MCF 10A (cell line): ENCODE measurements at regions of chr15 and their contacts with region 1.

Region 1: GRCh38 chr15:40217159-40217824 is 21.6 kb upstream of the PAK6 start:
- DNase-seq: peak; percentile 70
- H3K4me3 Mint-ChIP-seq: no peak overlapping the region
- H3K27ac Mint-ChIP-seq: no peak overlapping the region
- H3K4me1 Mint-ChIP-seq: peaks cover 6% of the 10 kb centered on the region
- H3K27me3 Mint-ChIP-seq: no peaks in the 10 kb centered on the region
- CTCF ChIP-seq: peak; percentile 91

Region 2: GRCh38 chr15:39976291-39977274 is 240.7 kb before region 1 on chr15:
- CTCF ChIA-PET with region 1: no interaction called
- POLR2A ChIA-PET with region 1: no interaction called
- intact Hi-C with region 1: no loop called
- DNase-seq: no peak
- H3K4me3 Mint-ChIP-seq: no peak overlapping the region
- H3K27ac Mint-ChIP-seq: no peak overlapping the region
- H3K4me1 Mint-ChIP-seq: no peaks in the 10 kb centered on the region
- H3K27me3 Mint-ChIP-seq: no peaks in the 10 kb centered on the region
- CTCF ChIP-seq: no peak

Region 3: DNA sequence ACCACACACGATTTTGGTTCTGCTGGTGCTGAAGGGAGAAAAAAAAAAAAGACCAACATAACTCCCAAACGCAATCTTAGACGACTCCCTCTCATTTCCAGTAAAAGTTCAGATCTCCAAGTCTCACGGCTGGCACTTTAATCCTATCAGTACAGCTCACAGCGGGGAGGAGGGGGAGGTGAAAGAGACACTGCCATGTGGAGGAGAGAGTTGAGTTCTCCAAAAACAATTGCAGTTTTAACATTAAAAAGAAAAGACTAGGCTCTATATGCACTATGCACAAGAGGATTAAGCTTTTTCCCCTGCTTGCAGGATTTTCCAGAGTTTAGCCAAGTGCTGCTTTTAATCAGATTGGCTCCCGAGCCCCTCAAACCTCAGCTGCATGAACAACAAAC is 125.4 kb before region 1 on chr15:
- CTCF ChIA-PET with region 1: no interaction called
- POLR2A ChIA-PET with region 1: no interaction called
- intact Hi-C with region 1: no loop called
- DNase-seq: no peak
- H3K4me3 Mint-ChIP-seq: no peak overlapping the region
- H3K27ac Mint-ChIP-seq: no peak overlapping the region
- H3K4me1 Mint-ChIP-seq: peaks cover 16% of the 10 kb centered on the region
- H3K27me3 Mint-ChIP-seq: no peaks in the 10 kb centered on the region
- CTCF ChIP-seq: no peak

Region 4: DNA sequence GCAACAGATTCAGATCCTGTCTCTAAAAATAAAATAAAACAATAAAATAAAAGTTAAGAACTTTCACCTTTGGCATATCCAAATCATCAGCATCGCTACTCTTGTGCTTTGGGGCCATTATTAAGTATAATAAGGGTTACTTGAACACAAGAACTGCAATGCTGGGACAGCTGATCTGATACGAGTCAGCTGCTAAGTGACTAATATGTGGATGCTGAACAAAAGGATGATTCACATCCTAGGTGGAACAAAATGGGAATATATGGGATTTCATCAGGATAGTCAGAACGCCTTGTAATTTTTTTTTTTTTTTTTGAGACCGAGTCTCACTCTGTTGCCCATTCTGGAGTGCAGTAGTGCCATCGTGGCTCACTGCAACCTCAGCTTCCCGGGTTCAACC is 26.7 kb before region 1 on chr15:
- CTCF ChIA-PET with region 1: interaction called, 12 read pairs
- POLR2A ChIA-PET with region 1: no interaction called
- intact Hi-C with region 1: no loop called
- DNase-seq: peak; percentile 48
- H3K4me3 Mint-ChIP-seq: no peak overlapping the region
- H3K27ac Mint-ChIP-seq: no peak overlapping the region
- H3K4me1 Mint-ChIP-seq: peaks cover 6% of the 10 kb centered on the region
- H3K27me3 Mint-ChIP-seq: no peaks in the 10 kb centered on the region
- CTCF ChIP-seq: no peak

Region 5: DNA sequence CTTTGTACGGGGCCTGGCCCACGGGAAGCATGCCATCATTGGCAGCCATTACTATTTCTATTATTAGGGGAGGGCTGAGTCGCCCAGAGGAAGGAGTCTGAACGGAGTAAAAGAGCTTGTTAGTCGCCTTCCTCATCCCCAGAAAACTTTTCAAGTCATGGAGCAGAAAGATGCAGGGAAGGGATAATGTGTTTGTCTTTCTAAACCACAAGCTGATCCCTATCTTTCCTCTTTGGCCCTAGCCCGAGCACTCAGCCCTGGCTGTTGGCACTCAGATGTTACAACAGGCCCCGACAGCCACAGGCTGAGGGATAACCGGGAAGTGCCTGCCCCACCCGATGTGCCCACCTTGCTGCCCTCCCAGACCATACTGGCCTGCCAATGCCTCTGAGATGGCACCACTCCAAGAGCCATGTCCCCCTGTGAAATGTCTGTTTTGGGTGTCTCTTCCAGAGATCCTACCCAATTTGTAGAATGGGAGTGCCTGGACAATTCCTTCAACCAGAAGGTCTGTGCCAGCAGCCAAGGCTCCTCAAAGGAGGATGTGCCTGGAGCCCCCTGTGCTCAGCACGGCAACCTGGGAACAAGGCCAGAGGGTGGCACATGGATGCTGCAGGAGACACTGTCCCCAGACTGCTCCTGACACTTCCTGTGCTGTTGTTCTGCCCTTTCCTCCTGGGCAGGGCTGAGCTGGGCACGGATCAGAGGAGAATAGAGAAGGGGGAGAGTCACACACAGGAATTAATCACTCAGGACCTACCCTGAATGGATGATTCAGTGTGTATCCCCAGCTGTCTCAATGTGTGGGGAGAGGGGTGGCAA is 32.4 kb after region 1 on chr15:
- CTCF ChIA-PET with region 1: interaction called, 68 read pairs
- POLR2A ChIA-PET with region 1: no interaction called
- intact Hi-C with region 1: no loop called
- DNase-seq: no peak
- H3K4me3 Mint-ChIP-seq: no peak overlapping the region
- H3K27ac Mint-ChIP-seq: peak overlapping the region; percentile 49
- H3K4me1 Mint-ChIP-seq: peaks cover 12% of the 10 kb centered on the region
- H3K27me3 Mint-ChIP-seq: no peaks in the 10 kb centered on the region
- CTCF ChIP-seq: no peak

Region 6: DNA sequence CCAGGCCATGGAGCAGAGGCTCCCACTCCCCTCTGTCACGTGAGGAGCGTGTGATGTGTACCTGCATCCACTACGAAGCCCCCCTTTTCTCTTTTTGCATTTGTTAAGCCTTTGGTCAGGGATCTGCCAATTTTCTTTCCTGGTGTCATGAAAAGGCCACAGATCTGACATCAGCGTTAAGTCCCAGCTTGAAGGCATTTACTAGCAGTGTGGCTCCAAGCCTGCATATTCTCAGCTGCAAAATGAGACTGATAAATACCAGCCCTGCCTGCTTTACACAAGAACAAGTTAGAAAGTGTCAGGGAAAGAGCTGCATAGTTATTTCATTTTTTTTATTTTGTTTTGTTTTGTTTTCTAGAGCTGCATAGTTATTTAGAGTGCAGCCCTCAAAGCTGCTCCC is 67.9 kb after region 1 on chr15:
- CTCF ChIA-PET with region 1: interaction called, 657 read pairs
- POLR2A ChIA-PET with region 1: no interaction called
- intact Hi-C with region 1: no loop called
- DNase-seq: no peak
- H3K4me3 Mint-ChIP-seq: no peak overlapping the region
- H3K27ac Mint-ChIP-seq: no peak overlapping the region
- H3K4me1 Mint-ChIP-seq: peaks cover 4% of the 10 kb centered on the region
- H3K27me3 Mint-ChIP-seq: no peaks in the 10 kb centered on the region
- CTCF ChIP-seq: no peak

Region 7: DNA sequence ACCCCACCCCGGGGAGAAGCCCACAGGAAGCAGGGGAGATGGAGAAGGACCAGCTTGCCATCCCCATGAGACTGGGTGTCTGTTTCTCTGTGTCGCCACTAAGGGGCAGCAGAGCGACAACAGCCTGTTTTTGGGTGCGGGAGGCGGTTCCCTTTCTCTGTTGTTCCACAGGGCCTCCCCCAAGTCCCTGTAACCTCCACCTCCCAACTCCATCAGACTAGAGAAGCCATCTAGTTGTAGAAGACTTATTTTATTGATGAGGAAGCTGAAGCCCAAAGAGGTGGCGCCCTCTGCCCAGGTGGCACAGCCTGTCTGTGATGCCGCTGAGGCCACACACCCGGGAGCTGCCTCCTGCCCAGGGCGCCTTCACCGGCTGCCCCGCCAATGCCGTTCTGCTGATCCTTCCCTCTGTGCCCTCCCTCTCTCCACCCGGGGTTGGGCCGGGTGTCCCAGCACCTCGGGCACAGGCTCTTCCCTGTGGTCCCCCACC is 127.4 kb after region 1 on chr15:
- CTCF ChIA-PET with region 1: interaction called, 23 read pairs
- POLR2A ChIA-PET with region 1: no interaction called
- intact Hi-C with region 1: no loop called
- DNase-seq: peak; percentile 73
- H3K4me3 Mint-ChIP-seq: no peak overlapping the region
- H3K27ac Mint-ChIP-seq: no peak overlapping the region
- H3K4me1 Mint-ChIP-seq: peaks cover 40% of the 10 kb centered on the region
- H3K27me3 Mint-ChIP-seq: no peaks in the 10 kb centered on the region
- CTCF ChIP-seq: peak; percentile 83

Region 8: GRCh38 chr15:41401904-41402267 is 1184.6 kb after region 1 on chr15:
- CTCF ChIA-PET with region 1: no interaction called
- POLR2A ChIA-PET with region 1: no interaction called
- intact Hi-C with region 1: no loop called
- DNase-seq: no peak
- H3K4me3 Mint-ChIP-seq: peak overlapping the region; percentile 92
- H3K27ac Mint-ChIP-seq: peak overlapping the region; percentile 96
- H3K4me1 Mint-ChIP-seq: peaks cover 10% of the 10 kb centered on the region
- H3K27me3 Mint-ChIP-seq: no peaks in the 10 kb centered on the region
- CTCF ChIP-seq: no peak